OCI-LY7 (cell line): ENCODE measurements at regions of chr3 and their contacts with region 1.

Region 1: GRCh38 chr3:50611464-50612233 is at the start of gene CISH:
- DNase-seq: peak; percentile 78
- H3K4me3 ChIP-seq: peak within 1 kb of the TSS; percentile 68
- H3K27ac ChIP-seq: no peak within 1 kb of the TSS
- H3K4me1 ChIP-seq: peaks cover 7% of the 10 kb centered on the region
- CTCF ChIP-seq: peak; percentile 72
- total RNA-seq, gene CISH: 0.05 TPM in 1 of 2 replicates, not detected in the other

Region 2: GRCh38 chr3:50068134-50068533 is 543.5 kb before region 1 on chr3:
- CTCF ChIA-PET with region 1: no interaction called
- POLR2A ChIA-PET with region 1: no interaction called
- intact Hi-C with region 1: no loop called
- DNase-seq: no peak
- H3K4me3 ChIP-seq: no peak overlapping the region
- H3K27ac ChIP-seq: no peak overlapping the region
- H3K4me1 ChIP-seq: no peaks in the 10 kb centered on the region
- CTCF ChIP-seq: no peak

Region 3: GRCh38 chr3:50519471-50520089 is 92.1 kb before region 1 on chr3:
- CTCF ChIA-PET with region 1: no interaction called
- POLR2A ChIA-PET with region 1: no interaction called
- intact Hi-C with region 1: loop called (anchors 1 kb)
- DNase-seq: peak; percentile 70
- H3K4me3 ChIP-seq: no peak overlapping the region
- H3K27ac ChIP-seq: no peak overlapping the region
- H3K4me1 ChIP-seq: peaks cover 6% of the 10 kb centered on the region
- CTCF ChIP-seq: peak; percentile 91

Region 4: GRCh38 chr3:50568947-50569749 is 42.5 kb before region 1 on chr3 and contains the start of gene HEMK1:
- CTCF ChIA-PET with region 1: interaction called, 8 read pairs
- POLR2A ChIA-PET with region 1: interaction called, 6 read pairs
- intact Hi-C with region 1: loop called (anchors 1 kb)
- DNase-seq: peak; percentile 97
- H3K4me3 ChIP-seq: peak within 1 kb of the TSS; percentile 95
- H3K27ac ChIP-seq: peak within 1 kb of the TSS; percentile 55
- H3K4me1 ChIP-seq: peaks cover 25% of the 10 kb centered on the region
- CTCF ChIP-seq: no peak
- total RNA-seq, gene HEMK1: 18.9 and 19.3 TPM in 2 replicates

Region 5: DNA sequence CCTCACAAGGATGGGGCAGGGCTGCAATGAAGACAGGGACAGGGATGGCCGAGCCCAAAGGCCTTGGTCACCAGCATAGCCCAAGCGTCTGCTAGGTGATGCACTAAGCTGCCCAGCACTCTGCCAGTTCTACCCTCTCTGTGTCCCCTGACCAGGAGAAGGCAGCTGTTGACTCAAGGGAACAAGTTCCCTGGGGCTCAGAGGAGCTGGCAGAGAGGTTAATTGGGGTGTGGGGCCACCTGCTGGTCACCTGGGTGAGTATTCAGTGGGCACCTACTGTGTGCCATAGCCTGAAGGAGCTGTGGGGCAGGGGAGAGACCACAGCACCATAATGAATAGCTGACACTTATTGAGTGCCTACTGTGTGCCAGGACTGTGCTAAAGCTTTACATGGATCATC is 41.1 kb after region 1 on chr3:
- CTCF ChIA-PET with region 1: interaction called, 21 read pairs
- POLR2A ChIA-PET with region 1: no interaction called
- intact Hi-C with region 1: loop called (anchors 1 kb)
- DNase-seq: peak; percentile 57
- H3K4me3 ChIP-seq: no peak overlapping the region
- H3K27ac ChIP-seq: no peak overlapping the region
- H3K4me1 ChIP-seq: no peaks in the 10 kb centered on the region
- CTCF ChIP-seq: peak; percentile 77

Region 6: DNA sequence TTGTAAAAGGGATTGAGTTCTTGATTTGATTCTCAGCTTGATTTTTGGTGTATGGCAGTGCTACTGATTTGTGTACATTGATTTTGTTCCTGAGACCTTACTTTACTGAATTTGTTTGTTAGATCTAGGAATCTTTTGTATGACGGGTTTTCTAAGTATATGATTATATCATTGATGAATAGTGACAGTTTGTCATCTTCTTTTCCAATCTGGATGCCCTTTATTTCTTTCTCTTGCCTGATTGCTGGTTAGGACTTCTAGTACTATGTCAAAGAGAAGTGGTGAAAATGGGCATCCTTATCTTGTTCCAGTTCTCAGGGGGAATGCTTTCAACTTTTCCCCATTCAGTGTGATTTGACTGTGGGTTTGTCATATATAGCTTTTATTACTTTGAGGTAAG is 166.0 kb after region 1 on chr3:
- CTCF ChIA-PET with region 1: no interaction called
- POLR2A ChIA-PET with region 1: no interaction called
- intact Hi-C with region 1: no loop called
- DNase-seq: no peak
- H3K4me3 ChIP-seq: no peak overlapping the region
- H3K27ac ChIP-seq: no peak overlapping the region
- H3K4me1 ChIP-seq: no peaks in the 10 kb centered on the region
- CTCF ChIP-seq: no peak

Region 7: GRCh38 chr3:51391075-51391567 is 779.5 kb after region 1 on chr3 and contains the start of gene RBM15B:
- CTCF ChIA-PET with region 1: no interaction called
- POLR2A ChIA-PET with region 1: interaction called, 6 read pairs
- intact Hi-C with region 1: loop called (anchors 2 kb)
- DNase-seq: peak; percentile 98
- H3K4me3 ChIP-seq: peak within 1 kb of the TSS; percentile 86
- H3K27ac ChIP-seq: peak within 1 kb of the TSS; percentile 63
- H3K4me1 ChIP-seq: peaks cover 86% of the 10 kb centered on the region
- CTCF ChIP-seq: peak; percentile 40
- total RNA-seq, gene RBM15B: 30.5 and 34.2 TPM in 2 replicates